ENCODE measurements at regions of chr10 and their contacts with region 1.

Region 1: DNA sequence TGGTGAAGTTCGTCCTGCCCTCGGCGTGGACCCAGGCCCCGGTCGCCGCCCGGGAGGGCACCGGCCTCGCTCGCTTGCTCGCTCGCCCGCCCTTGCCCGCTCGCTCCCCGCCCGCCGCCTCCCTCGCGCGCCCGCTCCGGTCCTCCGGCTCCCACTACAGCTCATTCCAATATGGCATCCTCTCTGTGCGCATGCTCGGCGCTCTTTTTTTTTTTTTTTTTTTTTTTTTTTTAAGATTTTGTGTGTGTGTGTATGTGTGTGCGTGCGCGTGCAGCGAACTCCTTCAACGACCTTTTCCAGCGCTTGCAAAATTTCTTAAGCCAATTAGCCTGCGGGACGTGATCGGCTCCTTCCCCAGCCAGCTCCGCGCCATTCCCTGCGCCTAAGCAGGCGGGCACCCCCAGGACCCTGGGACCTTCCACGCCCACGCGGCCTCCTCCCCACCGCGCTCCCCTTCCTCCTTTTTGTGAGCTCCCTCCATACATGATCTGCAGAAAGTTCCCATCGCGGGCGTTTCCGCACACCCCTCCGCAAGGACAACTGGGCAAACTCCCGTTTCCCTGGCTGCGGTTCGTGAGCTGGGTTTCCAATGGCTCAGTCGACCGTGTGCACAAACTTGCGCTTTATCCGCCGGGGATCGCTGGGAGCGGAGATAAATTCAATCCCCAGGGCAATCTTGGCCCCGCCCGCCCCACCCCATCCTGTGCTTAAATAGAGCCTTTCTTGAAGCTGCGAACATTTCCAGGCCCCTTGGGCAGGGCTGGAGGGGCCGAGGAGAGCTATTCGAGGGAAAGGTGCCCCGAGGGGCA is at the start of gene SFMBT2:
- DNase-seq: peak; percentile 28 to 87 (median 62)
- ATAC-seq: peak; percentile 37
- H3K4me3 ChIP-seq: peak within 1 kb of the TSS; percentile 84
- H3K4me3 Mint-ChIP-seq: peak within 1 kb of the TSS; percentile 97
- H3K27ac ChIP-seq: peak within 1 kb of the TSS in 1 of 2 donors; percentile 61
- H3K27ac Mint-ChIP-seq: peak within 1 kb of the TSS; percentile 94
- H3K4me1 ChIP-seq: peaks cover 44% of the 10 kb centered on the region
- H3K4me1 Mint-ChIP-seq: peaks cover 51% of the 10 kb centered on the region
- H3K27me3 ChIP-seq: peaks cover 0 to 7% of the 10 kb centered on the region in 2 experiments
- H3K27me3 Mint-ChIP-seq: peaks cover 5% of the 10 kb centered on the region
- CTCF ChIP-seq: no peak
- total RNA-seq, gene SFMBT2: 41.0 to 42.0 TPM

Region 2: DNA sequence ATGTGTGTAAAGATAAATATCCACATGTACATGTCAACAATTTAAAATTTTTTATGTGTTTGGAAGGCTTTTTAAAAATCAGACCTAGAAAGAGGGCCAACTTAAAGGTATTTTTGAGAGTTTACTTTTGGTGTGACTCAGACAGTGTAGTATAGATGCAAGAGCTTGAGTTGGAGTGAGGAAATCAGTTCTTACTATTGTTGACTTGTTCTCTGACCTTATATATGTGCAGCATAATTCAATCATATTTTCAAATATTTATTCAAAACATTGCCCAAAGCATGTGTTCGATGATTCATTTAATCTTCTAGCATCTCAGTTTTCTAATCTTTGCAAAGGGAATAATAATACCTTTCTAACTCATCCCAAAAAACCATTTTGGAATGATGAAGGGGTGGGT is 587.3 kb before region 1 on chr10:
- CTCF ChIA-PET with region 1: no interaction called
- POLR2A ChIA-PET with region 1: no interaction called
- intact Hi-C with region 1: loop called in 1 of 2 experiments (anchors 10 kb)
- DNase-seq: no peak
- ATAC-seq: no peak
- H3K4me3 ChIP-seq: no peak overlapping the region
- H3K4me3 Mint-ChIP-seq: no peak overlapping the region
- H3K27ac ChIP-seq: no peak overlapping the region
- H3K27ac Mint-ChIP-seq: no peak overlapping the region
- H3K4me1 ChIP-seq: no peaks in the 10 kb centered on the region
- H3K4me1 Mint-ChIP-seq: no peaks in the 10 kb centered on the region
- H3K27me3 ChIP-seq: peaks cover 0 to under 1% of the 10 kb centered on the region in 2 experiments
- H3K27me3 Mint-ChIP-seq: peaks cover 16% of the 10 kb centered on the region
- CTCF ChIP-seq: no peak

Region 3: DNA sequence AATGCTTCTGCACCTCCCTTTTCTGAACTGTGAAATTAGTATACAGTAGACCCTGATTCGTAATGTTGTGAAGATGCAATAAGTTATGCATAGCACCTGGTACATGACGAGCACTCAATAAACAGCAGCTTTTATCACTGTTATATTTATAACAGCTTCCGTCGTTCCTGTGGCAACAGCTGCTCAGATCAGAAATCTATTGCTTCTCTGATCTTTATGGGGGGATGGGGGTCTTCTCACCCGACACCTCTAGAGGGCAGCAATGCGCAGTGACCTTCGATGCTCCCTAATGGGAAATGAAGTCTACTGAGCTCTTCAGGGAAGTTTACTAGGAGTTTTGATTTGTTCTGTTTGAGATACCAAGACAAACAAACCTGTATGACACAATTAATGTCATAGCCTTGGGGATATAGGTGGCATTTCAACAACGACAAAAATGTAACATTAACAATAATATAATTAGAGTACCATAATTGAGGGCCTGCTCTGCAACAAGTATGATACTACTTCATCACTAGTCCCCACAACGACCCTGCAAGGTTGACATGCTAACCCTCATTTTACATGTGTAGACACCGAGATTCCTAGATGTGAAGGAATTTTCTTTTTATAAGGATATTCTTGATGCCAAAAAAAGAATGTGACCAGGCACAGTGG is 289.8 kb before region 1 on chr10:
- CTCF ChIA-PET with region 1: interaction called, 4 read pairs
- POLR2A ChIA-PET with region 1: no interaction called
- intact Hi-C with region 1: loop called (anchors 1 to 2 kb)
- DNase-seq: peak; percentile 48 to 84 (median 61)
- ATAC-seq: peak; percentile 94
- H3K4me3 ChIP-seq: no peak overlapping the region
- H3K4me3 Mint-ChIP-seq: no peak overlapping the region
- H3K27ac ChIP-seq: no peak overlapping the region
- H3K27ac Mint-ChIP-seq: peak overlapping the region; percentile 65
- H3K4me1 ChIP-seq: peaks cover 7% of the 10 kb centered on the region
- H3K4me1 Mint-ChIP-seq: peaks cover 8% of the 10 kb centered on the region
- H3K27me3 ChIP-seq: no peaks in the 10 kb centered on the region
- H3K27me3 Mint-ChIP-seq: no peaks in the 10 kb centered on the region
- CTCF ChIP-seq: peak; percentile 82

Region 4: DNA sequence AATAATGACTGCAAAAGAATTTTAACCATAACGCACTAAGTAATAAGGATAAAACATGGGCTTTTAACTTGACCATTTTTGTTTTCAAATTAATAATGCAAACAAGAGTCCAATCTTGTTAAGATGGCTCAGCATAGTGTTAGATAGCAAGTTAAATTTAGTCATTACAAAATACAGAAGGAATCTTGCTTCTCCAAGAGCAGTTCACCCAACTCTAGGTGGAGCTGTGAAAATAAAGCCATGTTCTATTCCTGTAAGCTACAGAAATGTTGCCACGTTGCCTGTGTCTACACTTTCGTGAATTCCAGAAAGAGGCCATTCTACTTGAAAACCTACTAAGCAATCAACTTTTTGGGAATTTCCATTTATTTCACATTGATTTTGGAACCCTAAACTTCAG is 192.1 kb before region 1 on chr10:
- CTCF ChIA-PET with region 1: no interaction called
- POLR2A ChIA-PET with region 1: no interaction called
- intact Hi-C with region 1: no loop called
- DNase-seq: no peak
- ATAC-seq: no peak
- H3K4me3 ChIP-seq: no peak overlapping the region
- H3K4me3 Mint-ChIP-seq: no peak overlapping the region
- H3K27ac ChIP-seq: no peak overlapping the region
- H3K27ac Mint-ChIP-seq: no peak overlapping the region
- H3K4me1 ChIP-seq: no peaks in the 10 kb centered on the region
- H3K4me1 Mint-ChIP-seq: no peaks in the 10 kb centered on the region
- H3K27me3 ChIP-seq: no peaks in the 10 kb centered on the region
- H3K27me3 Mint-ChIP-seq: no peaks in the 10 kb centered on the region
- CTCF ChIP-seq: no peak

Region 5: DNA sequence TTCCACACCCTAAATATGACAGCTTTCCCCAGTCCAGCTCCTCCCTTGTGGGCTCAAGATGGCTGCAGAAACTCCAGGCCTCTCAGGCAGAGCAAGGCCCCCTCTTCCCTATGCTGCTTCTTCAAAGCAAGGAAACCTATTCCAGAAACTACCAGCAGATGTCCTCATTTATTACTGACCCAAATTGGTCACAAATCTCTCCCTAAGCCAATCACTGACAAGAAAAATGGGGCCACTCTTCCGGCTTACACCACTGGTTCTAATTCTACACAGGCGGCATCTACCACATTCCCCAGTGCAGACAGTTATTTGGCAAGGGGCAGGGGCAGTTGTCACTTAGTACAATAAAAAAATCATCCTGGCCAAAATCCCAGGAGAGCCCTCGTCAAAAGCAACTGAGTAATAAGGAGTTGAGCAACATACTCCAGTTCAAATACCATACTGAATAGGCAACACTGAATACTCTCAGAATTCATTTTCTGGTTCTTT is 150.6 kb before region 1 on chr10:
- CTCF ChIA-PET with region 1: interaction called, 3 read pairs
- POLR2A ChIA-PET with region 1: interaction called, 11 read pairs
- intact Hi-C with region 1: loop called (anchors 2 to 5 kb)
- DNase-seq: peak in 4 of 14 experiments; percentile 25 to 75 (median 68)
- ATAC-seq: peak; percentile 27
- H3K4me3 ChIP-seq: no peak overlapping the region
- H3K4me3 Mint-ChIP-seq: peak overlapping the region; percentile 30
- H3K27ac ChIP-seq: no peak overlapping the region
- H3K27ac Mint-ChIP-seq: peak overlapping the region; percentile 85
- H3K4me1 ChIP-seq: peaks cover 42% of the 10 kb centered on the region
- H3K4me1 Mint-ChIP-seq: peaks cover 59% of the 10 kb centered on the region
- H3K27me3 ChIP-seq: no peaks in the 10 kb centered on the region
- H3K27me3 Mint-ChIP-seq: no peaks in the 10 kb centered on the region
- CTCF ChIP-seq: peak; percentile 65

Region 6: DNA sequence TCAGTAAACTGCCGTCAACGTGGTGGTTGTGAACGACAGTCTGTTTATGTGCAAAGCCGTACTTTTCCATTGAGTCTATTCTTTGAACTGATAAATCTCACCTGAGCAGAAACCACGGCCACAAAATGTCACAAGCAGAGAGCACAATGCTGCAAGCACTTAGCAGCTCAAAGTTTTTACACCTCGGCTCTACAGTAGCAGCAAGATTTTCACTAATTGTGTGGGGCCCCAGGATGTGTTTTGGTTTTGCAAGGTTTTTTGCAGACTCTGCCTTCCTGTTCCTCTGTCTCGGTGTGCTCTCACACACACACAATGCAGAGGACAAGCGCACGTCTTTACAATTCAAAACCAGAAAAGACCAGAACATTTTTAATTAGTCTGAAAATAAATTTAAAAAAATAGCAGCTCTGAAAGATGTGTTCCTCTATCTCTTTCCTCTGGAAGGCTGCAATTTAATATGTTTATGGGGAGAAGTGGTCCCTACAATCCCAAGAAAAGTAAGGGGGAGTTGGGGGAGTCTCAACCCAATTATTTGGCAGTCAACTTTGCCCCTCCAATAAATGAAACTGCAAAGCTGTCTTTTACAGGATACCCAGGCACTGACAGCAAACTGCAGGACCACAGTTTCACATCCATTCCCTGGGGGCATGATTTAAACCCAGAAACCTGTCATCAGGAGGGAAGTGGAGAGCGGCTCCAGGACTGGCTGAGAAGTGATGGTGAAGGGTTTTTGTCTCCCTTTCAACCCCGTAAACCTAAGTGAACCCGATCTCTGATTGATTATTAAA is 73.6 kb after region 1 on chr10:
- CTCF ChIA-PET with region 1: no interaction called
- POLR2A ChIA-PET with region 1: interaction called, 21 read pairs
- intact Hi-C with region 1: loop called in 1 of 2 experiments (anchors 5 kb)
- DNase-seq: peak; percentile 38 to 88 (median 62)
- ATAC-seq: peak; percentile 83
- H3K4me3 ChIP-seq: peak overlapping the region; percentile 46
- H3K4me3 Mint-ChIP-seq: peak overlapping the region; percentile 83
- H3K27ac ChIP-seq: peak overlapping the region; percentile 62 to 80
- H3K27ac Mint-ChIP-seq: peak overlapping the region; percentile 95
- H3K4me1 ChIP-seq: peaks cover 72% of the 10 kb centered on the region
- H3K4me1 Mint-ChIP-seq: peaks cover 90% of the 10 kb centered on the region
- H3K27me3 ChIP-seq: no peaks in the 10 kb centered on the region
- H3K27me3 Mint-ChIP-seq: no peaks in the 10 kb centered on the region
- CTCF ChIP-seq: no peak

Region 7: GRCh38 chr10:7787857-7788638 is 377.0 kb after region 1 on chr10 and contains the starts of genes ATP5F1C and KIN:
- CTCF ChIA-PET with region 1: no interaction called
- POLR2A ChIA-PET with region 1: no interaction called
- intact Hi-C with region 1: loop called in 1 of 2 experiments (anchors 10 kb)
- DNase-seq: peak; percentile 95 to 99 (median 96)
- ATAC-seq: peak; percentile 95
- H3K4me3 ChIP-seq: peak within 1 kb of the TSS; percentile 93
- H3K4me3 Mint-ChIP-seq: no peak within 1 kb of the TSS
- H3K27ac ChIP-seq: peak within 1 kb of the TSS; percentile 45 to 57
- H3K27ac Mint-ChIP-seq: no peak within 1 kb of the TSS
- H3K4me1 ChIP-seq: peaks cover 27% of the 10 kb centered on the region
- H3K4me1 Mint-ChIP-seq: peaks cover 66% of the 10 kb centered on the region
- H3K27me3 ChIP-seq: no peaks in the 10 kb centered on the region
- H3K27me3 Mint-ChIP-seq: no peaks in the 10 kb centered on the region
- CTCF ChIP-seq: no peak
- total RNA-seq, gene ATP5F1C: 111 TPM
- total RNA-seq, gene KIN: 6.5 to 8.6 TPM